IMR-90 (cell line): ENCODE measurements at regions of chr17 and their contacts with region 1.

Region 1: DNA sequence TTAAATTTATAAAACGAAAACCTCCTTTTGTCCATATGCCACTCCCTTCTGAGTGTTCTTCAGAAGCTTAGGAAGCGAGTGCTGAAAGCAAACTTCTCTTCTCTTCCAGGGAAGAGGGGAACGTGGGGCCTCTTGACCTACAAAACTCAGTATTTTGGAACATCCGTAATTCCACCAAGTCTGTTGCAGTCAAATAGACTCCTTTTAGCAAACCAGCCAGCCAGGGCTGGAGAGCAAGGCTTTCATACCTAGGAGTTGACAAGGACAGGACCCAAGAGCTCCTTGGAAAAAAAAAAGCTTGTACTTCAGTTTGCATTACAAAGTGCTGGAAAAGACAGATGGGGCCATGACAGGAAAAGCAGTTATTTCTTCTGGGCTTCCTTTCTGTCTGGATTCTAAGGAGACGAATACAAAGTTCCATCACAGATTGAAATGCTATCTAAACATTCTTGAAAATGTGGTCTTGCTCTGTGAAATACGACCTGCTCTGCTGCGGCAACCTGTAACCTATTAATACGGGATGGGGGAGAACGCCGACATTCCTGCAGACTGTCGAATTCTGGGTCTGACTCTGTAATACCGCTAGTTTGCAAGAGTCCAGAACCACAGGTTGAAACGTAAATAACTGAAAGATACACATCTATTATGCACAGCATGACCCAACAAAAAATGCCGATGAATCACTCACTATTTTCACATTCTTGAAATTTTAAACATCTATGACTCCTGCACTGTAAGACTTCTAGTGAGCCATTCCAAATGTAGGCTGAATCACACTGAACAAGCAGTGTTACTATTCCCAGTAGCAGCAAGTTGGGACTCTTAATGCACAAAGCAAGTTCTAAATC is 20.6 kb downstream of the VPS53 start:
- DNase-seq: peak; percentile 99
- ATAC-seq: peak; percentile 84
- H3K4me3 ChIP-seq: no peak overlapping the region
- H3K27ac ChIP-seq: peak overlapping the region; percentile 79
- H3K4me1 ChIP-seq: peaks cover 20% of the 10 kb centered on the region
- H3K27me3 ChIP-seq: no peaks in the 10 kb centered on the region
- CTCF ChIP-seq: no peak
- POLR2A ChIP-seq: 0 out of 2 replicates have a peak, but pooled peaks have one; percentile 33
- RAD21 ChIP-seq: no peak; the same call in none of the 2 replicates

Region 2: DNA sequence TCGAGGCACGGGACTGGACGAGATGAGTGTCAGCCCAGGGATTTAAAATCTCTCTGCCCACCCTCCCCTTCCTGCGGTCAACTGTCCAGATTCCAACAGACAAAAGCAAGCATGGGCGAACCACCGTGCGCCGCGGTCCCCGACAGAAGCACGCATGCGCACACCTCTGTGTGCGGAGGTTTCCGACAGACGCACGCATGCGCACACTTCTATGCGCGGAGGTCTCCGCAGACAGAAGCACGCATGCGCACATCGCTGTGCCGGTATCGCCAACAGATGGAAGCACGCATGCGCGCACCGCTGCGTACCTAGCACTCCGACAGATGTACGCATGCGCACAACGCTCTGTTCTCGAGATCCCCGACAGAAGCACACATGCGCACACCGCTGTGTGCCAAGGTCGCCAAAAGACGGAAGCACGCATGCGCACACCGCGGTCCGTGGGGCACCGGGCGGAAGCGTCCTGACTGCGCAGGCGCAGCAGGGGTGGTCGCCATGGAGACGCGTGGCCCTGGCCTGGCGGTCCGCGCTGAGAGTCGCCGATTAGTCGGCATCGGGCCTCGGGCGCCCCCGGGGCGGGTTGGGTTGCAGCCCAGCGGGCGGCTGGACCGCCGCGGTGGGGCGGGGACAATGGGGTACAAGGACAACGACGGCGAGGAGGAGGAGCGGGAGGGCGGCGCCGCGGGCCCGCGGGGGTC is 284.0 kb before region 1 on chr17:
- CTCF ChIA-PET with region 1: interaction called, 34 read pairs
- POLR2A ChIA-PET with region 1: no interaction called
- dilution Hi-C with region 1: no loop called
- in situ Hi-C with region 1: no loop called
- intact Hi-C with region 1: no loop called
- DNase-seq: peak; percentile 98
- ATAC-seq: peak; percentile 91
- H3K4me3 ChIP-seq: peak overlapping the region; percentile 44
- H3K27ac ChIP-seq: peak overlapping the region; percentile 48
- H3K4me1 ChIP-seq: peaks cover 4% of the 10 kb centered on the region
- H3K27me3 ChIP-seq: no peaks in the 10 kb centered on the region
- CTCF ChIP-seq: peak; percentile 9; the same call in 1 of the 2 replicates
- POLR2A ChIP-seq: peak; percentile 60
- RAD21 ChIP-seq: no peak

Region 3: GRCh38 chr17:549177-550040 is 144.6 kb before region 1 on chr17:
- CTCF ChIA-PET with region 1: no interaction called
- POLR2A ChIA-PET with region 1: no interaction called
- dilution Hi-C with region 1: no loop called
- in situ Hi-C with region 1: no loop called
- intact Hi-C with region 1: loop called (anchors 5 kb)
- DNase-seq: peak; percentile 83
- ATAC-seq: peak; percentile 94
- H3K4me3 ChIP-seq: peak overlapping the region; percentile 17; the same call in 1 of the 2 replicates
- H3K27ac ChIP-seq: peak overlapping the region; percentile 82
- H3K4me1 ChIP-seq: peaks cover 14% of the 10 kb centered on the region
- H3K27me3 ChIP-seq: no peaks in the 10 kb centered on the region
- CTCF ChIP-seq: no peak
- POLR2A ChIP-seq: 0 out of 2 replicates have a peak, but pooled peaks have one; percentile 41
- RAD21 ChIP-seq: no peak

Region 4: DNA sequence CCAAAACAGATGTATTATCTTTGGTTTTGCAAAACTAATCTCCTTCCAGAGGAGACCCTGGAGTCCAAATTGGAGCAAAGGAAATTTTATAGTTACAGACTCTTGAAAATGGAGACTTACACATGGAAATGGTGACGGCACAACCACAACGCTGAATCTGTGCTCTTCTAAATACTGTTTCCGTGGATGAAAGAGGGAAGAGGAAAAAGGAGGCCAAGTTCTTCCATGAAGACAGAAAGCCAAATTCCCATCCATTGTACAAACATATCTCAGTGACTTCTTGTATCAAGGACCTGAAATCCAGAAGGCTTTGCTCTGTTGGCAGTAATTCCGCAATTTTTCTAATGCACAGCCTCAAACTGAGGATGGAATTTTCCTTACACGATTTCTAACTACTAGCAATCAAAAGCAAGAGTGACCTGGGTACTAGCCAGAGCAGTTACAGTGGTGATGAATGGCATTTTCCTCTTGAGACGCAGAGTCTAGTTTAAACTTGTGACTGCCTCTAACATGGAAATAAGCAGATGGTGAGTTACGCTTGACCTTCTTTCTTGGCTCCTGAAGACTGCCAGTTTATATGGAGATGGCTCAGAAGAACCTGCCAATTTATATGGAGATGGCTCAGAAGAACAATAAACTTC is 17.8 kb before region 1 on chr17:
- CTCF ChIA-PET with region 1: no interaction called
- POLR2A ChIA-PET with region 1: no interaction called
- dilution Hi-C with region 1: no loop called
- in situ Hi-C with region 1: no loop called
- intact Hi-C with region 1: no loop called
- DNase-seq: peak; percentile 83
- ATAC-seq: peak; percentile 6; the same call in 1 of the 2 replicates
- H3K4me3 ChIP-seq: no peak overlapping the region
- H3K27ac ChIP-seq: no peak overlapping the region; the same call in 1 of the 2 replicates
- H3K4me1 ChIP-seq: peaks cover 18% of the 10 kb centered on the region
- H3K27me3 ChIP-seq: no peaks in the 10 kb centered on the region
- CTCF ChIP-seq: no peak
- POLR2A ChIP-seq: no peak
- RAD21 ChIP-seq: no peak

Region 5: GRCh38 chr17:740240-741017 is 46.4 kb after region 1 on chr17:
- CTCF ChIA-PET with region 1: no interaction called
- POLR2A ChIA-PET with region 1: no interaction called
- dilution Hi-C with region 1: no loop called
- in situ Hi-C with region 1: no loop called
- intact Hi-C with region 1: no loop called
- DNase-seq: no peak
- ATAC-seq: no peak
- H3K4me3 ChIP-seq: no peak overlapping the region
- H3K27ac ChIP-seq: no peak overlapping the region
- H3K4me1 ChIP-seq: no peaks in the 10 kb centered on the region
- H3K27me3 ChIP-seq: no peaks in the 10 kb centered on the region
- CTCF ChIP-seq: no peak
- POLR2A ChIP-seq: no peak
- RAD21 ChIP-seq: no peak

Region 6: DNA sequence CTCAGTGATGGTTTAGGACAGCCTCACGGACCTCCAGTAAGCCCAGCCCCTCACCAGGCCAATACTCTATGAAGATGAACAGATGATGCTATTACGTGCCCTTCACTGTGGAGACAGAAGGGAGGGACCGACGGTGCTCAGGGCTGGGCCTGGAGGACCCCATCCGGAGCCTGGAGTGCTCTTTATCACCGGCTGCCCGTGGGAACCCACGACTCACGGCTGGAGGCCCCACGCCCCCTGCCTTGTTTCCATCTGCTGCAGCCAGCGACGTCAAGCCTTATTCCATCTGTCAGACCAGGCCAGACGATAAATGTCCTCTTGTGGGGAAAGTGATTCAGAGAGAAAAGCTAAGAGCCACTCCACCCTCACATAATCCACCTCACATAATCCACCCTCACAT is 298.9 kb after region 1 on chr17:
- CTCF ChIA-PET with region 1: no interaction called
- POLR2A ChIA-PET with region 1: no interaction called
- dilution Hi-C with region 1: no loop called
- in situ Hi-C with region 1: no loop called
- intact Hi-C with region 1: no loop called
- DNase-seq: peak; percentile 26
- ATAC-seq: no peak
- H3K4me3 ChIP-seq: no peak overlapping the region
- H3K27ac ChIP-seq: no peak overlapping the region
- H3K4me1 ChIP-seq: 0 out of 2 replicates have a peak, but pooled peaks cover 2% of the 10 kb centered on the region
- H3K27me3 ChIP-seq: no peaks in the 10 kb centered on the region
- CTCF ChIP-seq: no peak
- POLR2A ChIP-seq: no peak
- RAD21 ChIP-seq: no peak